Colonic mucosa (tissue), 4 donors: ENCODE measurements at regions of chr9 and their contacts with region 1.

Region 1: DNA sequence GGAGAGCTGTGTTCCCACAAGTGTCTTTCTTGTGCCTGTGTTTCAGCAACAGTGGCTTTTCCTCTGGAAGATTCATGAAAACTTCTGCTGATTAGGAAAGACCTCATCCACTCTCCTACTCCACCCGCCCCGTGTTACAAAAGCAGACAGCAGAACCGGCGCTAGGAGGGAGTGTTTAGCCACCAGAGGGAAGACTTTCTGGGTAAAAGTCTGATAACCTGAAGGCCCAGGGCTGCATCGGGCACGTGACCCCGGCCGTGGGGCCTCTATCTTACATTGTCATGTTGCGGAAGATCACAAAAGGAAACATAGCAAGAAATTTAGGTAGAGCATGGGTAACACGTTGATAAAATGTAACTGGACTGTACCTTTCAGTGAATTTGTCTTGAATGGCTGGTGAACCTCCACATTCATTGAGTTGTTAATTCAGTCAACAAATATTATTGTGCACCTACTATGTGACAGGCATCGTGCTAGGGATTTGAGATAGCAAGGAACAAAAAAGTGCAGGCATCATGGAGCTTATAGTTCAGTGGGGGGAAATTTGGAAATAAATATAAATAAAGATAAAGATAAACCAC is 31.9 kb upstream of the DMRT2 start:
- DNase-seq: peak; percentile 40
- H3K4me3 ChIP-seq: no peak overlapping the region
- H3K27ac ChIP-seq: no peak overlapping the region
- H3K4me1 ChIP-seq: no peaks in the 10 kb centered on the region
- H3K27me3 ChIP-seq: no peaks in the 10 kb centered on the region
- CTCF ChIP-seq: peak; percentile 30

Region 2: DNA sequence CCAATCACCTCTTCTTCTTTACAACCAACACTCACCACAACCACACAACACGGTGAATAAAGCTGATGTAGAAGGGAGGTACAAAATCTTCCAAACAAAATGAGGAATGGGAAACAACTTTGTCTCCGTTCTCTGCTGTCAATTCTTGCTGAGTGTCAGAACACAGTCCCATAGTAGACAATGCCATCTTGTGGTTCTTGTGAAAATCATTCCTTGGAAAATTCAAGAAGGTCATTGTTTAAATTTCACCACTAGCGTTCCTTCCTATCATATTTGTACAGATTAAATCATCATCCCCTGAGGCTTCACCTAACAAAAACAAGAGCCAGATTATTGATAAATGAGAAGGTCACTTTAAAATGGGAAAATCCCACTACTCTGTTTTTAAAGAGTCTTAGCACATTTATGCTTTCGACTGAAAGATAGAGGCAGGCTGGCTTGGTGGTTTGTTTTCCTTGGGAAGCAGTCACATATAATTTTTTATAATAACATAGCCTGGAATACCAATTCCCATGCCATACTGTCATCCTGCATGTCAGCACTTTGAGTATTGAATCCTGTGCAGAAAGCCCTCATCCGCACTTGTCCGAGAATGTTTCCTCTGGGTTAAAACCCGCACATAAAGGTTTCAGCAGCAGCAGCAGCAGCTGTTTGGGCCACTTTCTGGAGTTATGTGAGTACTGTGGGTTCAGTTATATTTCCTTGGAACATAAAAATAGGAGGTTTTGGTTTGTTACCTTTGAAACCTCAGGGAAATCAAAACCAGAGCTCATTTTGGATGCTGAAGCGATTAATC is 601.9 kb after region 1 on chr9:
- intact Hi-C with region 1: loop called (anchors 10 kb)
- DNase-seq: no peak
- H3K4me3 ChIP-seq: no peak overlapping the region
- H3K27ac ChIP-seq: no peak overlapping the region
- H3K4me1 ChIP-seq: no peaks in the 10 kb centered on the region
- H3K27me3 ChIP-seq: no peaks in the 10 kb centered on the region
- CTCF ChIP-seq: no peak